WTC11 (cell line): ENCODE measurements at regions of chr16 and their contacts with region 1.

Region 1: GRCh38 chr16:72467157-72467759 is 295.3 kb upstream of the PMFBP1 start:
- DNase-seq: no peak
- ATAC-seq: peak; percentile 92
- H3K4me3 Mint-ChIP-seq: no peak overlapping the region
- H3K27ac Mint-ChIP-seq: no peak overlapping the region
- H3K4me1 Mint-ChIP-seq: no peaks in the 10 kb centered on the region
- H3K27me3 Mint-ChIP-seq: no peaks in the 10 kb centered on the region
- CTCF ChIP-seq: no peak

Region 2: DNA sequence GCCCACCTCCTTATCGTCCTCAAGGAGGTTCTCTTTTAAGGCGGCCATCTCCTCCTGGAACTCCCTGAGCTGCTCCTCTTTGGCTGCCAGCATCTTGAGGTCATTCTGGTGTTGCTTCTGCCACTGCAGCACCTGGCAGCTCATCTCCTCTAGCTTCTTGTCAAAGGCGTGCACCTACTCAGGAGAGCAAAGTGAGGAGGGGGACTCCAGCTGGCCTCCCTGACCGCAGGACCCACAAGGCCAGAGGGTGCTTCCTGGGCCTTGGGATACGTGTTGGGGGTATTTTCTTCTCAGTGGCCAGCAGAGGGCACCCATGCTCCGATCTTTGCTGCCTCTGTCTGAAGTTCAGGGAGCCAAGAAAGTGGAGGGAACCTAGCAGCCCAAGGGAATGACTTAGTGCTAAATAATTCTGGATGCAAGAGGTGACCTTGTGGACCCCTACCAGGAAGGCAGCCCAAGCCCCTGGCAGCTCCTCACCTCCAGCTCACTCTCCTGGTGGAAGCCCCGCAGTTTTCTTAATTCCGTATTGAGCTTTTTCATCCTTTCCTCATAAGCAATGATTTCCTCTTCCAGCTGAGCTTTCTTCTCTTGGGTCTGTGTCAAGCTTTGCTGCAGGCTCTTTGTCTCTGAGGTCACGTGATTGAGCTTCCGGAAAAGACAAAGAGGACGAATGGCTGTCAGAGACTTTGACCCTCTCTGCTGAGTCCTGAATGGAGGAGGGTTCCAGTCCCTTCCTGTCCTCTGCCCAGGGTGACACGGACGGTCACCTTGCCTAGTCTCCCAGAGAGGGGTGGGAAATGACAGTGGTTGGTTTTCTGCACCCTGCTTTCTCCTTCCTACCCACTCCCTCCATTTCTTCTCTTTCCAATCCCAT is 342.3 kb before region 1 on chr16:
- CTCF ChIA-PET with region 1: interaction called, 22 read pairs
- POLR2A ChIA-PET with region 1: no interaction called
- DNase-seq: peak; percentile 80
- ATAC-seq: peak; percentile 90
- H3K4me3 Mint-ChIP-seq: no peak overlapping the region
- H3K27ac Mint-ChIP-seq: 0 out of 2 replicates have a peak overlapping the region, but pooled peaks have one; percentile 8
- H3K4me1 Mint-ChIP-seq: peaks cover 19% of the 10 kb centered on the region
- H3K27me3 Mint-ChIP-seq: no peaks in the 10 kb centered on the region; the same call in 1 of the 2 replicates
- CTCF ChIP-seq: peak; percentile 80

Region 3: GRCh38 chr16:72241930-72242329 is 225.3 kb before region 1 on chr16:
- CTCF ChIA-PET with region 1: interaction called, 12 read pairs
- POLR2A ChIA-PET with region 1: no interaction called
- DNase-seq: no peak
- ATAC-seq: peak; percentile 95
- H3K4me3 Mint-ChIP-seq: no peak overlapping the region
- H3K27ac Mint-ChIP-seq: no peak overlapping the region
- H3K4me1 Mint-ChIP-seq: no peaks in the 10 kb centered on the region
- H3K27me3 Mint-ChIP-seq: no peaks in the 10 kb centered on the region; the same call in 1 of the 2 replicates
- CTCF ChIP-seq: peak; percentile 70

Region 4: DNA sequence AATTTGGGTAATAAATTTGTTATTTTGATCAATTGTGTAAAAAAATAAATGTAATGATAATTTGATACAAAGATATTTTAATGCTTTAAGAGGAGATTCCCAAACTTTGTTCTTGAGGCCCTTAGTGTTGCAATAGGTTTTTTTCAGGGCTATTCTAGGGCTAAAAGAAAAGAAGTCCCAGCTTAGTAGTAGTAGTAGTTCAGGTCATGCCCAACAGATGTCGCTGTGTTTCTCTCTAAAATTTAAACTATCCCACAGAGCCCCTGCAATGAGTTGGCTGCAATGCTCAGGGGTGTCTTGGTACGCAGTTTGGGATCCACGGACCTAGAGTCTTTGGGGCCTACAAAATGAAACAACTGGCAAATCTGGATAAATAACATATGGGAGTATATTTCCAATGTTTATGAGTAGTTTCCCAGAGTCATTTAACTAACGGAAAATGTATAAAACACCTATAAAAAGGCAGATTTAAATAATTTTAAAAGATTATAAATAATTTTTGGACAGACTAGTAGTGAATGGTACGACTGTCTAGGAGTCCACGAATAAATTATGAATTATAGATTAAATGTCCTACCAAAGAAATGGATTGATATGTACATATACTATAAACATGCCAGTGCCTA is 66.9 kb before region 1 on chr16:
- CTCF ChIA-PET with region 1: interaction called, 20 read pairs
- POLR2A ChIA-PET with region 1: no interaction called
- DNase-seq: peak; percentile 60
- ATAC-seq: peak; percentile 97
- H3K4me3 Mint-ChIP-seq: no peak overlapping the region
- H3K27ac Mint-ChIP-seq: peak overlapping the region; percentile 59; the same call in 1 of the 2 replicates
- H3K4me1 Mint-ChIP-seq: peaks cover 6% of the 10 kb centered on the region; the same call in 1 of the 2 replicates
- H3K27me3 Mint-ChIP-seq: no peaks in the 10 kb centered on the region
- CTCF ChIP-seq: peak; percentile 61

Region 5: GRCh38 chr16:72455743-72456659 is 11.3 kb before region 1 on chr16:
- CTCF ChIA-PET with region 1: interaction called, 10 read pairs
- POLR2A ChIA-PET with region 1: no interaction called
- DNase-seq: no peak
- ATAC-seq: peak; percentile 39; the same call in 1 of the 2 replicates
- H3K4me3 Mint-ChIP-seq: no peak overlapping the region
- H3K27ac Mint-ChIP-seq: no peak overlapping the region
- H3K4me1 Mint-ChIP-seq: peaks cover 8% of the 10 kb centered on the region; the same call in 1 of the 2 replicates
- H3K27me3 Mint-ChIP-seq: no peaks in the 10 kb centered on the region; the same call in 1 of the 2 replicates
- CTCF ChIP-seq: no peak

Region 6: GRCh38 chr16:72523087-72523486 is 55.8 kb after region 1 on chr16:
- CTCF ChIA-PET with region 1: no interaction called
- POLR2A ChIA-PET with region 1: no interaction called
- DNase-seq: no peak
- ATAC-seq: no peak
- H3K4me3 Mint-ChIP-seq: no peak overlapping the region
- H3K27ac Mint-ChIP-seq: no peak overlapping the region
- H3K4me1 Mint-ChIP-seq: no peaks in the 10 kb centered on the region
- H3K27me3 Mint-ChIP-seq: no peaks in the 10 kb centered on the region
- CTCF ChIP-seq: no peak